A549 (cell line): ENCODE measurements at regions of chr17 and their contacts with region 1.

Region 1: GRCh38 chr17:79188048-79188447 is 113.4 kb downstream of the ENGASE start:
- DNase-seq: peak; percentile 50 to 88
- ATAC-seq: peak; percentile 57 to 79; a peak in 4 of 6 replicates
- H3K4me3 ChIP-seq: no peak overlapping the region
- H3K27ac ChIP-seq: no peak overlapping the region
- H3K4me1 ChIP-seq: no peaks in the 10 kb centered on the region; the same call in 2 of the 3 replicates
- CTCF ChIP-seq: peak; percentile 88
- EP300 ChIP-seq: no peak
- POLR2A ChIP-seq: no peak
- RAD21 ChIP-seq: peak; percentile 82 to 94

Region 2: GRCh38 chr17:79009397-79010308 is 178.4 kb before region 1 on chr17 and contains the start of gene CANT1:
- CTCF ChIA-PET with region 1: no interaction called
- POLR2A ChIA-PET with region 1: no interaction called
- DNase-seq: peak; percentile 87 to 95
- ATAC-seq: peak; percentile 86 to 97
- H3K4me3 ChIP-seq: peak within 1 kb of the TSS; percentile 98
- H3K27ac ChIP-seq: peak within 1 kb of the TSS; percentile 98 to 99
- H3K4me1 ChIP-seq: peaks cover 31% of the 10 kb centered on the region
- CTCF ChIP-seq: no peak
- EP300 ChIP-seq: no peak
- POLR2A ChIP-seq: peak; percentile 65
- RAD21 ChIP-seq: no peak
- polyA plus RNA-seq, gene CANT1: 65.5 and 70.0 TPM in 2 replicates

Region 3: GRCh38 chr17:79162012-79162963 is 25.8 kb before region 1 on chr17:
- CTCF ChIA-PET with region 1: interaction called, 15 read pairs
- POLR2A ChIA-PET with region 1: no interaction called
- DNase-seq: no peak
- ATAC-seq: no peak
- H3K4me3 ChIP-seq: no peak overlapping the region
- H3K27ac ChIP-seq: no peak overlapping the region
- H3K4me1 ChIP-seq: peaks cover 6% of the 10 kb centered on the region; the same call in 1 of the 3 replicates
- CTCF ChIP-seq: no peak
- EP300 ChIP-seq: no peak
- POLR2A ChIP-seq: no peak
- RAD21 ChIP-seq: no peak

Region 4: DNA sequence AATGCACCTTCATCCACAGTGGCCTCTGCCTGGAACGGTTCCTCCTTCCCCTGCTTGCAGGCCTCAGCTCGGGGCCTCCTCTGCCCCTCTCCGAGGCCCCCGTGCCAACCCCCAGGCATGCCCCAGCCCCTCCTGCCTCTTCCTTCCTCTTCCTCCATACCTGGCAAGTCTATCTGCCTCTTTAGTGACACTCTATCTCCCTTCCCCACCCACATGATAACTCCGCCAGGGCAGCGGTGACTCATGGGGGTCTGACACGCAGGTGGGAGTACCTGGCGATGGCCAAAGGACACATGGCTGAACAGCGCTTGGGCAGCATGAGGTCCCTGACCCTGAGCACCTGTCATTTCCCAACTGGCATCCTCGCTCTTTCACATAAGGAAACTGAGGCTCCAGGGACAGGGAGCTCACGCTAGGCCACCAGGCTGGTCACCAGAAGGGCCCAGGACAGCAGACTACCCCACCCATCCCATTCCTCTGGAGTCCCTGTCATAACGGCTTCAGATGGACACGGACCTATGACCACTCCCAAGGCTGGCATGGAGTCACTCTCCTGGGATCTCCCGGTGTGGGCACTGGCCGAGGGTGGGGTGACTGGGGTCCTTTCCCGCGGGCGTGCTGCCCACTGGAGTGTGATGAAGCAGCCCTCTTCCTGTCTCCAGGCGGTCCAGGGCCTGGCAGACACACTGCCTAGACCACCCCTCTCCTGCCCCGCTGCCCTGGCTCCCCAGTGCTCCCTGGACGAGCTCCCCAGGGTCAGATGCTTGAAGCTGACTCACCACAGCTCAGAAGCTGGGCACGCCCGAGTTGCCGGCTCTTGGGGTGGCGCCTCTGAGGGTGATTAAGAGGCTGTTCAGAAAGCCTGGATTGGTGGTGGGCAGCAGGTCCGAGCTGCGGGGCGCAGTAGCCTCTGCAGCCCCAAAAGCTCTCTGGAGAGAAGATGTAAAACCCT is 12.9 kb before region 1 on chr17:
- CTCF ChIA-PET with region 1: interaction called, 20 read pairs
- POLR2A ChIA-PET with region 1: no interaction called
- DNase-seq: peak in 1 of 2 experiments; percentile 24
- ATAC-seq: peak; percentile 44 to 49; a peak in 4 of 6 replicates
- H3K4me3 ChIP-seq: no peak overlapping the region
- H3K27ac ChIP-seq: peak overlapping the region in 1 of 2 experiments; percentile 28; a peak in 1 of 6 replicates
- H3K4me1 ChIP-seq: peaks cover 11% of the 10 kb centered on the region; the same call in 1 of the 3 replicates
- CTCF ChIP-seq: no peak
- EP300 ChIP-seq: no peak
- POLR2A ChIP-seq: no peak
- RAD21 ChIP-seq: no peak

Region 5: DNA sequence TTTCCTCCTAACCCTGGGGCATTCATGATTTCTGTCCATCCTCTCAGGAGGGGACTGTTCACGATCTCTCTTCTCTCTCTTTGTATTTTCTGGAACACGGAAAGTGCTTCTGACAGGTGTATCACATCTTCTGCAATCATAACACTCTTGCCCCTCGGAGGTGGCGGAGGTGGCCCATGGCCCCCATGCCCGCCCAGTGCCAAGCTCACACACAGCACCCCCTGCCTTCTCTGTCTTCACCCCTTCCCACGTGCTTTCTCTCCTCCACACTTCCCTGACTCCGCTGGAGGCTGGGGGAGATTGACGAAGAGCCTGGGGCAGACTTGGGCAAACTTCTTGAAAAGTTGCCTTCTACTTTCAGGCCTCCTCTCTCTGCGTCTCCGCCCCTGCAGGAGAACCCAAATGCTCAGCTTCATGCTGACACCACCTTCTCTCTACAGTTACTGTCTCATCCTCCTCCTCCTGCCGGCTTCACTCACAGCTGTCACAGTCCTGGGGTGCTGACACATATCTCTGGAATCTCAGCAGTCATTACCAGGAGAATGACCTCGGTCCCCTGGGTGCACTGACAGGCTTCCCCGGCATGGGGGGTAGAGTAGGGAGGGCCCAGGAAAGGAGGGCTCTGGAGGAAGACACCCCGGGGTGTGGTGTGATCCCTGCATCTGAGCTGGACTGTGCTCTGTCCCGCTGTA is 13.6 kb after region 1 on chr17:
- CTCF ChIA-PET with region 1: interaction called, 23 read pairs
- POLR2A ChIA-PET with region 1: no interaction called
- DNase-seq: peak; percentile 22 to 87
- ATAC-seq: peak; percentile 51 to 53; a peak in 5 of 6 replicates
- H3K4me3 ChIP-seq: no peak overlapping the region
- H3K27ac ChIP-seq: 0 out of 6 replicates have a peak overlapping the region, but pooled peaks of 1 of the 2 experiments have one; percentile 17
- H3K4me1 ChIP-seq: peaks cover 15% of the 10 kb centered on the region; the same call in 2 of the 3 replicates
- CTCF ChIP-seq: no peak
- EP300 ChIP-seq: no peak
- POLR2A ChIP-seq: no peak
- RAD21 ChIP-seq: no peak

Region 6: DNA sequence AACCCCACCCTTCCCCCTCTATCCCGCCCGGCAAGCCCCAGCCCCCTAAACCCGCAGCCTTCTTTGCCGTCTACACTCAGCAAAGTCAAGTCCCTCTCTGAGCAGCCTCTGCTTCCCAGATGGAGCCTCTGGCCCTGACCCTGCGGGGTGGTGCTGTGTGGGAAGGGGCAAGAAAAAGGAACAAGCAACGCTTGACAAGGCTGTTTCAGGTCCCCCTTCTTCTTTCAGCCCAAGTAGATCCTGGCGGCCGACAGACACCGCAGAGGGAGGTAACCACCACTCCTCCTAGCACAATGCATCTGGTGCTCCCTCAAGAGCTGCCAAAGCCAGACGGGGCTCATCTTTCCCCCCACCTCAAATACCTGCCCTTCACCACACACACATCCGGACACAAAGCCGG is 64.8 kb after region 1 on chr17:
- CTCF ChIA-PET with region 1: no interaction called
- POLR2A ChIA-PET with region 1: no interaction called
- DNase-seq: no peak
- ATAC-seq: no peak
- H3K4me3 ChIP-seq: no peak overlapping the region
- H3K27ac ChIP-seq: no peak overlapping the region
- H3K4me1 ChIP-seq: no peaks in the 10 kb centered on the region; the same call in 2 of the 3 replicates
- CTCF ChIP-seq: no peak
- EP300 ChIP-seq: no peak
- POLR2A ChIP-seq: no peak
- RAD21 ChIP-seq: no peak